Left ventricle myocardium superior (tissue), 1 donor: ENCODE measurements at regions of chr3 and their contacts with region 1.

Region 1: DNA sequence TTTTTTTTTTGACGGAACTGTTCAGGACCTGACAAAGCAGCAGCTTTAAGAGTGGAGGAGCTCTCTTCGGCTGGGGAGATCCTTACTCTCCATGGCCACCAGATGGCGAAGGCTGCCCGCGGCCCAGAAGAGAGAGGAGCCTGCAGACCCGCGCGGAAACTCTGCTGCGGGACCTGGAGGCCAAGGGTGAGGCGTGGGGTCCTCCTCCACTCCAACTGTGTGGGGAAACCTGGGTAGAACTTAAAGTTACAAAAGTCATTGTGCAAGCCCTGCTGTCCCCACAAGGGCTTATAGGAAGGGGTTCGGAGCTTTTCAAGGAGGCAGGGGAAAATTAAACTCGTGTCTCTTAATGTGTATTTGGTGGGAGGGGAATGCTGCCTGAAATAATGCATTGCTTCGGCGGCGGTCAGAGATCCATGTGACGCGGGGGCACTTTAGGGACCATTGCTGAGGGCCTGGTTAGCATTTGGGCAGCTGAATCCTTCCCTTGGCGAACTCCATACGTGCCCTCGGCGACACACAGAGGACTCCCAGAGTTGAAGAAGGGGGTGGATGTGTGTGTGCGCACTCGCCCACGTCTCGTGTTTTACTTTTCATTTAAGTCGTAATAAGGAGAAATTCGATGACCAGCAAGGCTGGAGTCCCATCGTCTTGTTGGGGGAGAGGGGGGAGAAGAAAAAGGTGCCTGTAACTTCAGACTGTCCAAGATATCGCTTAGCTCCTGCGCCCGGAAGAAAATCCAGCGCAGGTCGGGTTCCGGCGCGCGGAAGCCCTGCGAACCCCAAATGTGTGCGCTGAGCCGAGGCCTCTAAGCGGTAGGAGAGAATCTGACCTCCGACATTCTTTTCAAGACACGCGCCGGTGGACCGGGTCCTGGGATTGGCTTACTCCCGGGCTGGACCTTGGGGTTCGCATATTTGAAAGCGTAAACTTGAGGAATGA is 9.7 kb downstream of the EOMES start:
- DNase-seq: peak; percentile 82
- ATAC-seq: peak; percentile 98

Region 2: GRCh38 chr3:28328188-28329151 is 616.1 kb after region 1 on chr3:
- intact Hi-C with region 1: loop called (anchors 2 kb)
- DNase-seq: no peak
- ATAC-seq: no peak